GM13977 (cell line): ENCODE measurements at regions of chr19 and their contacts with region 1.

Region 1: DNA sequence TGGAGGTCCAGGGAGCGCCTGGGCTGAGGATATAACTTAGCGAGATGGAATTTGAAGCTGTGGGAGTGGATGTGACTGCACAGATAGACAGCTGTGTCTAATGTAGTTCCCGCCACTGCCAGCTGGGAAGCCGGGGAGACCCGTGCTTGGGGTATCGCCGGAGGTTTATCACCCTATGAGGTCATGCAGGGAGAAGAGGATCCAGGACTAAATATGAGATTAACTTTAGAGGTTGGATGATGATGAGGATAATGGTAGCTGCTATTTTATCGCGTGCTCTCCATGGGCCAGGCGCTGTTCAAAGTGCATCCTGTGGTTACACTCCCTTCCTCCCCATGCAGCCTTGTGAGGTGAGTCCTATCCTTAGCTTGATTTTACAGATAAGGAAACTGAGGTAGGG is 19.9 kb downstream of the SSC5D start:
- DNase-seq: no peak
- CTCF ChIP-seq: no peak

Region 2: GRCh38 chr19:55372316-55373081 is 135.6 kb before region 1 on chr19:
- in situ Hi-C with region 1: no loop called
- DNase-seq: no peak
- CTCF ChIP-seq: no peak

Region 3: GRCh38 chr19:55461259-55461973 is 46.7 kb before region 1 on chr19 and contains the start of gene ISOC2:
- in situ Hi-C with region 1: no loop called
- DNase-seq: peak; percentile 100
- CTCF ChIP-seq: no peak

Region 4: GRCh38 chr19:55552620-55553019 is 44.5 kb after region 1 on chr19:
- in situ Hi-C with region 1: no loop called
- DNase-seq: no peak
- CTCF ChIP-seq: no peak

Region 5: GRCh38 chr19:55624109-55625003 is 116.2 kb after region 1 on chr19 and contains the start of gene ZNF784:
- in situ Hi-C with region 1: loop called (anchors 5 kb)
- DNase-seq: peak; percentile 96
- CTCF ChIP-seq: no peak